ENCODE measurements at regions of chr11 and their contacts with region 1.

Region 1: DNA sequence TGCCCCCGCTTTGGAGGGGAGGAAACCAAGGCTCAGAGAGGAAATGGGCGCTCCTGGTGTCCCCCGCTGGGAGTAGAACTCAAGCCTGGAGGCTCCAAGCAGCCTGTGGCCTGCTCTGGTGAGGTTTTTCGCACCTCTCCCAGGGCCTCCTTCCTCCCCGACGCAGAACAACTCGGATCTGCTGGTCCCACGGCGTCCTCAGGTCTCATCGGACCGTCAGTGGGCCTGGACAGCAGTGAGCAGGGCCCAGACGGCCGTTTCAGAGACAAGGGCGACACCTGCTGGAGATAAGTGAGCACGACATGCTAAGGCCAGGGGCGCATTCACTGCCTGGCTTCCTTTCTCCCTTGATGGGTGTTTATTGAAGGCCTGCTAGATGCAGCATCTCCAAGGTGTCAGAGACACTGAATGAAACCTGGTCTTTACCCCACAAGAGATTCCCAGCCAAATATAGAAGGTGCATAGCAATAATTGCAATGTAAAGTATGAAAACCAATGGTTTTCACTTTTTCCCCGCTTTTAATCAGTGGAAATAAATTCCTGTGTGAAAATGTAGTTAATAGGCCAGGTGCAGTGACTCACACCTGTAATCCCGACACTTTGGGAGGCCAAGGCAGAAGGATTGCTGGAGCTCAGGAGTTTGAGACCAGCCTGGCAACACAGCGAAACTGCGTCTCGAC is 26.9 kb upstream of the CD82 start:
- DNase-seq: no peak
- H3K4me3 ChIP-seq: no peak overlapping the region
- H3K27ac ChIP-seq: no peak overlapping the region
- H3K4me1 ChIP-seq: no peaks in the 10 kb centered on the region
- H3K27me3 ChIP-seq: no peaks in the 10 kb centered on the region
- CTCF ChIP-seq: peak; percentile 92 to 95 (median 95)
- POLR2A ChIP-seq: no peak

Region 2: DNA sequence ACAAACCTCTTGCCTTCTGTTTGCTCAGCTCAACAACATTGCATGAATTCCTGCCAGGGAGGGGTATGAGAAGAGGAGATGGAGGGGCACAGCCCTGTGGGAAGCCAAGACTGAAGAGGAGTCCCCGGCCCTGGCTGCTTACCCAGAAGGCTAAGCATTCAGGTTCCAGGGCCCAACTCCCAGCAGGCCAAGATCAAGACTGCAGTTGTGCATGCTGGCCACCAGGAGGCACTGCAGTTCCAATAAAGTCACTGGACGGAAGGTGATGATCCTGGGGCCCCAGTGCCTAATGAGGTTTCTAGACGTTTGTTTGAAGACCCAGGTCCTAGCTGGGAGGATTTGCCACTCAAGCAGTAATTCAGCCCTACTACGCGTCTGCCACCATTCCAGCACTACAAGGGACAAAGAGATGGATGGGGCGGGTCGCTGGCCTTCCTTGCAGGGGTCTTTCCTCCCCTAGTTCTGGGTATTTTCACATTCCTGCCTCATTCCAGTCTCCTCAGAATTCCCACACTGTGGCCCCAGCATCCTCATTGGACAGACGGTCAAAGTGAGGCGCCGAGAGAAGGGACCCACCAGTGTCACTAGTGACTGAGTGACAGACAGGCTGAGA is 252.1 kb before region 1 on chr11:
- intact Hi-C with region 1: loop called (anchors 5 kb)
- DNase-seq: no peak
- H3K4me3 ChIP-seq: no peak overlapping the region
- H3K27ac ChIP-seq: no peak overlapping the region
- H3K4me1 ChIP-seq: no peaks in the 10 kb centered on the region
- H3K27me3 ChIP-seq: no peaks in the 10 kb centered on the region
- CTCF ChIP-seq: peak; percentile 73 to 90 (median 89)
- POLR2A ChIP-seq: no peak

Region 3: DNA sequence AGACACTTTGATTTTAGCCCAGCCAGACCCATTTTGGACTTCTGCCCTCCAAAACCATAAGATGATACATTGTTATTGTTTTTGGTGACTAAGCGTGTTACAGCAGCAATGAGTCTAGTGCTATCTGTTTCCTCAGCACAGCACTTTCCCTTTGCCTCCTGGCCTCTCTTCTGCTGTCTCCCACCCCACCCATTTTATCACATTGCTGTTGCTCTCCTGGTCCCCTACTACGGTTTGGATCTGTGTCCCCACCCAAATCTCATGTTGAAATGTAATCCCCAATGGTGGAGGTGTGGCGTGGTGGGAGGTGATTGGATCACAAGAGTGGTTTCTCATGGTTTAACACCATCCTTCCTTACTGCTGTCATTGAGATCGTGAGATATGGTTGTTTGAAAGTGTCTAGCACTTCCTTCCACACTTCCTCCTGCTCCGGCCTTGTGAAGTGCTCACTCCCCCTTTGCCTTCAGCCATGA is 32.9 kb before region 1 on chr11:
- intact Hi-C with region 1: no loop called
- DNase-seq: no peak
- H3K4me3 ChIP-seq: no peak overlapping the region
- H3K27ac ChIP-seq: no peak overlapping the region
- H3K4me1 ChIP-seq: no peaks in the 10 kb centered on the region
- H3K27me3 ChIP-seq: no peaks in the 10 kb centered on the region
- CTCF ChIP-seq: no peak
- POLR2A ChIP-seq: no peak